Activated naive CD4-positive, alpha-beta T cell treated with anti-CD3 and anti-CD28 coated beads, Interleukin-2, amount 10 ng/mL, durations not matched to agents 7 days and 5 days (primary cell): ENCODE measurements at regions of chr9 and their contacts with region 1.

Region 1: GRCh38 chr9:112443200-112443599 is 43.4 kb upstream of the KIAA1958 start:
- DNase-seq: peak; percentile 50
- H3K4me3 Mint-ChIP-seq: no peak overlapping the region
- H3K27ac Mint-ChIP-seq: no peak overlapping the region
- H3K4me1 Mint-ChIP-seq: no peaks in the 10 kb centered on the region
- H3K27me3 Mint-ChIP-seq: no peaks in the 10 kb centered on the region

Region 2: DNA sequence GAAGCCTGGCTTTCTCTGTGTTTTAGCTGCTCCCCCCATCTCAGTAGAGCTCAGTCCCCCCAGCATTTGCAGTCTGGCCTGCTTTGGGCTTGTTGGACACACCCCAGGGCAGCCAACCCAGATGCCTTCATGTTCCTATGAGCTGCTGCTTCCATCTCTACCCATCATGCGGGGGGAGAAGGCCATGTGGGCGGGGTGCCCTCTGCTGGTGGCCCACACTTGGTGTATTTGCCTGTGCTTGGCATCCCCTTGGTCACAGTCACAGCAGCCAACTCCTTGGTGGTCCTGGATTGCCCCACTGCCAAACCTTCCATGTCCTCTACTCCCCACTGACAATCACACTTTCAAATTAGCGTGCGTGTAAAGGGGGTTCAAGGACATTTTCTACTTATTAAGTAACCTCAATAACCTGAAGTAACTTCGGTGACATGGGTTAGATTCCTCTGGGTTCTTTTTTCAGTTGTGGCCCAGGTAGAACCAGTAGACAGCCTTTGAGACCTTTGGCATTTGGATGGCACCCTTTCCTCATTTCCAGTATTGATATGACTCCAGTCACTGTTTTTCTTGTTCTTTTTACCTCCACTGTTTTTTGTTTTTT is 350.1 kb after region 1 on chr9:
- CTCF ChIA-PET with region 1: interaction called, 13 read pairs
- DNase-seq: peak; percentile 89
- H3K4me3 Mint-ChIP-seq: no peak overlapping the region
- H3K27ac Mint-ChIP-seq: peak overlapping the region; percentile 15
- H3K4me1 Mint-ChIP-seq: peaks cover 7% of the 10 kb centered on the region
- H3K27me3 Mint-ChIP-seq: peaks cover 4% of the 10 kb centered on the region